ENCODE measurements at regions of chr1 and their contacts with region 1.

Region 1: DNA sequence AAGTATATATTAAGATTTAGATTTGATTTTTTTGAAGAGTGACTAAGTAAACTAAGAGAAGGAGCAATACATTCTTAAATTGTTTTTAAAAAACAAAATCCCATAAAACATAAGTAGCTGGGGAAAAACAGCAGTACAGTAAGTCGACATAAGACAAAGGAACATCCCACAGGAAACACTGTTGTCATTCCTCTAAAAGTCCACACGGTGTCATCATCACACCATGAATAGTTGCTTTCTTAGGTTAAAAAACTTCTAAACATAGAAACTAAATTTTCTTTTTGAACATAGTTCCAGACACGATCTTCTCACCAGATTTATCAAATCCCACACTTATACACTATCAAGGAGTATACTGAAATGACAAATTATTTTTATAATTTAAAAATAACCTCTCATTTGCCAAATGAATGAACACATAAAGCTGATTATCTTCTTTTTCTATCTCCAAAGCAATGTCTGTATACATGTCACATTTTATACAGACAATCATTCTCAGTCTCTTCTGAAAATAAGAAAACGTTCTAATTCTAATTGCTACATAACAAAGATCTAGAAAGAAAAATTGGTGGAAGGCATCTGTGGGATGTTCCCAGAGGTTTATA is 15.8 kb downstream of the ODF2L start:
- DNase-seq: peak; percentile 73
- ATAC-seq: peak; percentile 78
- H3K4me3 ChIP-seq: no peak overlapping the region
- H3K27ac ChIP-seq: no peak overlapping the region
- H3K4me1 ChIP-seq: no peaks in the 10 kb centered on the region; the same call in 1 of the 2 replicates
- H3K27me3 ChIP-seq: no peaks in the 10 kb centered on the region
- CTCF ChIP-seq: peak; percentile 84; the same call in 1 of the 2 replicates

Region 2: DNA sequence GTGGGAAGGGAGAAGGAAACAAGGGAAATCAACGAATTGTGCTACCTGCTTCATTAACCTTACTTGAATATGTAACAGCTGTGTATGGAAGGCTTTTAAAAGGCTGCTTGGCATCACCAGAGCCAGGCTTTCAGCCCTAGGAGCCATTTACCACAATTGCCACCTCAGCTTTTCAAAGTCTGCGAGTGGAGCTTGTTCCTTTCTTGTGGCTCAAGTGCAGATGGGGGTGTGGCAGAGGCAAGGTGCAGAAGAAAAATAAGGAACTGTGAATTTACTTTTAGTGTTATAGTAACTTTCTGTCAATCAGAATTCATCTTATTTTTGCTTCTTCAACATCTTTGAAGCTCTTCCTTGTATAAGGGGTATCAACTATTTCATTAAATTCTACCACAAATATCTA is 61.2 kb after region 1 on chr1:
- CTCF ChIA-PET with region 1: no interaction called
- POLR2A ChIA-PET with region 1: no interaction called
- in situ Hi-C with region 1: loop called (anchors 5 kb)
- intact Hi-C with region 1: no loop called
- DNase-seq: no peak
- ATAC-seq: no peak
- H3K4me3 ChIP-seq: no peak overlapping the region
- H3K27ac ChIP-seq: no peak overlapping the region
- H3K4me1 ChIP-seq: no peaks in the 10 kb centered on the region
- H3K27me3 ChIP-seq: peaks cover 23% of the 10 kb centered on the region
- CTCF ChIP-seq: no peak

Region 3: DNA sequence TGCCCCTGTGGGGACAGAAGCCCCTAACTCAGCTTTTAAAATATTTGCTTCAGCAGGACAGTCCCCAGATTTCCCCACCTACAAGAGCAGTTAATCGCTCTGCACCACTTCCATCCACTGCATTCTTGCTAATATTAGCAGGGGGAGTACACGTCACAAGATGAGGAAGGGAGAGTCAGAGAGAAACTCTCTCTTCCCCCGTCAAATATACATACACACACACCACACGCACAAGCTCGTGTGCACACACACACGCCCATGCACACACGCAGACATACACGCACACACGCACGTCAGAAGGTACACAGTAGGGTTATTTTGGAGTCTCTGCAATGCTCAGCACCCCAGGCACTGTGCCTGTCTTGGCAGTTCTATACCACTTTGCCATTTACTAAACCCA is 90.5 kb after region 1 on chr1:
- CTCF ChIA-PET with region 1: interaction called, 3 read pairs
- POLR2A ChIA-PET with region 1: no interaction called
- in situ Hi-C with region 1: no loop called
- intact Hi-C with region 1: loop called (anchors 5 kb)
- DNase-seq: no peak
- ATAC-seq: no peak
- H3K4me3 ChIP-seq: no peak overlapping the region
- H3K27ac ChIP-seq: no peak overlapping the region
- H3K4me1 ChIP-seq: no peaks in the 10 kb centered on the region
- H3K27me3 ChIP-seq: peaks cover 29% of the 10 kb centered on the region
- CTCF ChIP-seq: no peak

Region 4: DNA sequence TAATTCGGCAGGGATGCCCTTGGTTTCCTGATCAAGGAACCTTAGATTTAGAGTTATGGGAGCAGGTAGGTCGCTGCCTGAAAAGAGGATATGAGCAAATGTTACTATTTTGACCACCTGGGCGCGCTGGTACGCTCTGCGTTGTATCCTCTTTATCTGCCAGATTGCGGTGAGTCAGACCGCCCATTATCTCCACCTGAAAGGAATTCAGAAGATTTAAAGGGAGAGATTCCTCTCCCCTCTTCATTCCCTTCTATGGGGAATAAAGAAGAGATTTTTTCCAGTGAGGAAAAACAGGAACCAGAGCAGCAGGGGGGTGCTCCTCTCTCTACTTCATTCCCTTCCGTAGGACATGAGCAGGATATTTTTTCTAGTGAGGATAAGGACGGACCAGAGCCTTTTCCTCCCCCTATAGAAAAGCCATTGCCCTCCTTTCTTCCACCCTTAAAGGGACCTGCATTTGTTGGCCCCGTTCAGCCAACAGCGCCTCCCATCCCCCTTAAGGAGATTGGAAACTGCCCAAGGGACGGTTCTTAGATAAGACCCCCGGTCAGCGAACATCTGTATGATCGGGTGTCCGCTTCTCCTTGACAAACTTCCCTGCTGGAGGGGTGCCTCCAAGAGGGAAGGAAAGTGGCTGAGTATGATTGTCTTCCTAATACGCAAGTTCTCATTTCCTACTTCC is 122.5 kb after region 1 on chr1:
- CTCF ChIA-PET with region 1: interaction called, 3 read pairs
- POLR2A ChIA-PET with region 1: no interaction called
- in situ Hi-C with region 1: no loop called
- intact Hi-C with region 1: loop called (anchors 1 kb)
- DNase-seq: no peak
- ATAC-seq: peak; percentile 30; the same call in 1 of the 2 replicates
- H3K4me3 ChIP-seq: peak overlapping the region in 1 of 2 experiments; percentile 16; a peak in 2 of 4 replicates
- H3K27ac ChIP-seq: no peak overlapping the region
- H3K4me1 ChIP-seq: peaks cover 4% of the 10 kb centered on the region; the same call in 1 of the 2 replicates
- H3K27me3 ChIP-seq: peaks cover 15% of the 10 kb centered on the region
- CTCF ChIP-seq: no peak

Region 5: DNA sequence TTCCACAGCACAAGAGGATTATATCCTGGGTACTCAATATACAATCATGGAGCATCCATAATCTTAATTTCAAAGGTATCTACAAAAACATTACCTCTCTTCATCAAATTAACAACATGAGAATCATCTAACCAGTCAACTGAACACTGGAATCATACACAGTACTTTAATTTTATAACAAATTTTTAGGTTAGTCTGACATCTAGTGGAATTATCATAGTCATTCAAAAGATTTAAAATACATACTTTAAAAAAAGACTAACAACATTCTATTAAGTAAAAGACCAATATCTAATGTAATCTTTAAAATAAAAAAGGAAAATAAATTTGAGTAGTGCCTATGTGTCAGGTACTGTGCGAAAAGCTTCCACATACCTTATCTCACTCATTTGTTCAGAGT is 307.2 kb after region 1 on chr1:
- CTCF ChIA-PET with region 1: no interaction called
- POLR2A ChIA-PET with region 1: no interaction called
- in situ Hi-C with region 1: no loop called
- intact Hi-C with region 1: loop called (anchors 5 kb)
- DNase-seq: no peak
- ATAC-seq: no peak
- H3K4me3 ChIP-seq: no peak overlapping the region
- H3K27ac ChIP-seq: no peak overlapping the region
- H3K4me1 ChIP-seq: no peaks in the 10 kb centered on the region
- H3K27me3 ChIP-seq: peaks cover 13% of the 10 kb centered on the region
- CTCF ChIP-seq: no peak; the same call in 1 of the 2 replicates

Measured in Panc1 (cell line).